CD8-positive, alpha-beta T cell (primary cell): ENCODE measurements at regions of chr7 and their contacts with region 1.

Region 1: GRCh38 chr7:2403014-2403717 is at the start of gene CHST12:
- DNase-seq: peak; percentile 87 to 99 (median 94)
- ATAC-seq: peak; percentile 78
- H3K4me3 ChIP-seq: peak within 1 kb of the TSS; percentile 84
- H3K4me3 Mint-ChIP-seq: peak within 1 kb of the TSS; percentile 84
- H3K27ac ChIP-seq: peak within 1 kb of the TSS; percentile 49 to 66
- H3K27ac Mint-ChIP-seq: peak within 1 kb of the TSS; percentile 88
- H3K4me1 ChIP-seq: peaks cover 53% of the 10 kb centered on the region
- H3K4me1 Mint-ChIP-seq: peaks cover 50% of the 10 kb centered on the region
- H3K27me3 ChIP-seq: no peaks in the 10 kb centered on the region
- H3K27me3 Mint-ChIP-seq: no peaks in the 10 kb centered on the region
- CTCF ChIP-seq: no peak
- total RNA-seq, gene CHST12: 10.3 to 11.7 TPM

Region 2: DNA sequence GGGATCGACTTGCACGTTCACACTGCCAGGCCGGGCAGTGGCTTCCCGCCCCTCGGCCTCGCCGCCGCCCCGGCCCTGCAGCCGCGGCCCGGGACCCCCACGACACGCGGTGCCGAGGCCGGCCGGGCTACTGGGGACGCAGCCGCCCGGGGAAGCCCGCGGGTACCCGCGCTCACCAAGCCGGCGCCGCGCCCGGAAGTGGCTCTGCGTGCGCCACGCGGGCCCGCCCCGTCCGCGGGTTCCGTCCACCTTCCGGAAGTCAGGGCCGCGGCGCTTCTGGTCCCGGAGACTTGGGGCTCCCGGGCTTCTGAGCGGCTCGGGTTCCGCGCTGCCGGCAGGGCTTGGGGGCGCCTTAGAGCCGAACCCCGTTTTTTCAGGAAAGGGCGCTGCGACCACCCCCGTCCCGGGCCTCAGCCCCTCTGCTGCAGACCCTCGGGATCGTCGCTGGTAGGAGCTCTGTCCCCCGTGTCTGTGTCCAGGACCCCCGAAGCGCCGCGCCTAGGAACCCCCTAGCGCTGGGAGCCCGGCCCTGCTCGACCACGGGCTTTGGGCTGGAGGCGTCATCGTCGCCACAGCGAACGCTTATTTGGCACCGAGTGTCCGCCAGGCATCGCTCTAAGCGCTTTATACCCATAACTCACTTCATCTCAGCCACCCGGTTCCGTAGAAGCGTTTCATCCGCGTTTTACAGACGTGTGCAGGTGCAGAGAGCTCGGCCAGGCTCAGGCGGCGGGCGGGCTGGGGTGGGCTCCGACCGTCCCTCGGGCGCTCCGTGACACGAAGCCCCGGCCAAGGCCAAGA is 833.1 kb before region 1 on chr7 and contains the start of gene PSMG3:
- CTCF ChIA-PET with region 1: no interaction called
- POLR2A ChIA-PET with region 1: no interaction called
- intact Hi-C with region 1: loop called in 1 of 2 experiments (anchors 1 kb)
- DNase-seq: peak; percentile 77 to 93 (median 88)
- ATAC-seq: peak; percentile 87
- H3K4me3 ChIP-seq: peak within 1 kb of the TSS; percentile 64 to 95
- H3K4me3 Mint-ChIP-seq: peak within 1 kb of the TSS; percentile 87
- H3K27ac ChIP-seq: peak within 1 kb of the TSS; percentile 69 to 90
- H3K27ac Mint-ChIP-seq: peak within 1 kb of the TSS; percentile 91
- H3K4me1 ChIP-seq: peaks cover 16% of the 10 kb centered on the region
- H3K4me1 Mint-ChIP-seq: peaks cover 29% of the 10 kb centered on the region
- H3K27me3 ChIP-seq: no peaks in the 10 kb centered on the region
- H3K27me3 Mint-ChIP-seq: no peaks in the 10 kb centered on the region
- CTCF ChIP-seq: no peak
- total RNA-seq, gene PSMG3: 20.9 to 21.0 TPM

Region 3: DNA sequence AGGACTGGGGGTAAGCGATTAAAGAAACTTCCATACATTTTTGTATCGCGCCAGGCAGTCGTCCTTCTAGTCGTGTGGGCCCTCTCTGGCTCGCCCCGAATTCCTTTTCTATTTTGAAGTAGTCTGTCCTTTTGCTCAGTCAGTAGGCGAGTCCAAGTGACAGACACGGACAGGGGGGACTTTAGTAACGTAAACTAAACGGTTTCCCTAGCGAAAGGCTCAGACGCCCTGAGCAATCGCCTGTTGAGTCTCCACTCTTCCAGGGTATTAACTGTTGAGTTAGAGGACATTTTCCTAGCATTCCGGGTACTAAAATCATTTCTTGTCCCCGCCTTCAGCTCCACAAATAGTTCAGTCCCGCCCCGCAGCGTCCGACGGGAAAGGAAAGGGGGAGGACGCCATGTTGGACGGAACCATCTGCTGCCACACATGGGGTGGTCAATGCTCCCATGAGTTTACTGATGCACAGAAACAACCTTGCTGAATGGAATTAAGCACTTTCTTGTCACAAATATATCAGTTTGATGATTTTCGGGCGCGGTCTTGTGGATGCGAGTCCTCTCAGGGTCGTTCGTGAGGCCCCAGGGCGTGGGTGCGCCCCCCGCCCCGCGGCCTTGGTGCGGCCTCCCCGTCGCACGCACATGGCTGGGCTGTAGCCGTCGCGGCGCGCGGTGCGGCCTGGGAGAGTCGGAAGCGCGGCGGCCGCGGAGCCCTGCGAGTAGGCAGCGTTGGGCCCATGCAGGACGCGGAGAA is 48.8 kb before region 1 on chr7 and contains the start of gene EIF3B:
- CTCF ChIA-PET with region 1: interaction called, 4 read pairs
- POLR2A ChIA-PET with region 1: interaction called, 10 read pairs
- intact Hi-C with region 1: loop called (anchors 1 kb)
- DNase-seq: peak; percentile 80 to 97 (median 90)
- ATAC-seq: peak; percentile 84
- H3K4me3 ChIP-seq: peak within 1 kb of the TSS; percentile 72 to 74
- H3K4me3 Mint-ChIP-seq: peak within 1 kb of the TSS; percentile 88
- H3K27ac ChIP-seq: peak within 1 kb of the TSS; percentile 99
- H3K27ac Mint-ChIP-seq: peak within 1 kb of the TSS; percentile 99
- H3K4me1 ChIP-seq: peaks cover 45% of the 10 kb centered on the region
- H3K4me1 Mint-ChIP-seq: peaks cover 40% of the 10 kb centered on the region
- H3K27me3 ChIP-seq: no peaks in the 10 kb centered on the region
- H3K27me3 Mint-ChIP-seq: no peaks in the 10 kb centered on the region
- CTCF ChIP-seq: no peak
- total RNA-seq, gene EIF3B: 234 to 239 TPM

Region 4: DNA sequence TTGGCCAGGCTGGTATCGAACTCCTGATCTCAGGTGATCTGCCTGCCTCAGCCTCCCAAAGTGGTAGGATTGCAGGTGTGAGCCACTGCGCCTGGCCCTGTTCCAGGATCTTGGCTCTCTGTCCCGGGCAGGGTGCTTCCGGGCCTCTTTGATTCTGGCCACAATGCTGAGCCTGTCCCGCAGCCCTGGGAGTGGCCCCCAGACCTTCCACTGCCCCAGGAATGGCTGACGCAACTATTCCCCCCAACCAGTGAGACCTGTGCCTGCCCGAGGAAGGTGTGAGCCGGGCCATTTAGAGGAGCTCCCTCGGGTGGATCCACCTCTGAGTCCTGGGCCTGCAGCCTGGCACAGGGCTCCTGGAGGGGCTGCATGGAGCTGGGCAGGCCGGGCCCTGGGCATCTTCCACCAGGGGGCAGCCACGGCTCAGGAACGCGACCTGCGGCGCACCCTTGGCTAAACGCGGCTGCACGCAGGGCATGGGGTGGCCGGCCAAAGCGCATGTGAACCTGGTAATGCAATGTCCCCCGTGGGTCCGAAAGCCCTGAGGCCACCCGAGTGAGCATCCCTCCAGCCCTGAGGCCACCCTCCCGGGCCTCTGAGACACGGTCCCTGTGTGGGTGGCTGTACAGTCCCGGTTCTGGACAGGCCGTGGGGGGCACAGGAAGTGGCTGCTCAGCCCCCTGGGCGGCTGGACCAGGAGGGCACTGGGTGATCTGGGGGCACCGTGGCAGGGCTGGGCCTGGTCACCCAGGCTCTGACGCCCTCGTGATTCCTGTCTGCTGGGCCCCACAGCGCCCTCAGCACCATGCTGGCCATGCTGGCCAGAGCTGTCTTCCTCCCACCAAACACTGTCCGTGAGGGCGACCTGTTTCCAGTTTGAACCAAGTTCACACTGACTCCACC is 48.3 kb after region 1 on chr7:
- CTCF ChIA-PET with region 1: interaction called, 9 read pairs
- POLR2A ChIA-PET with region 1: no interaction called
- intact Hi-C with region 1: loop called in 1 of 2 experiments (anchors 5 kb)
- DNase-seq: peak; percentile 55 to 87 (median 79)
- ATAC-seq: peak; percentile 96
- H3K4me3 ChIP-seq: peak overlapping the region; percentile 45 to 56
- H3K4me3 Mint-ChIP-seq: peak overlapping the region; percentile 67
- H3K27ac ChIP-seq: no peak overlapping the region
- H3K27ac Mint-ChIP-seq: no peak overlapping the region
- H3K4me1 ChIP-seq: peaks cover 8% of the 10 kb centered on the region
- H3K4me1 Mint-ChIP-seq: peaks cover 11% of the 10 kb centered on the region
- H3K27me3 ChIP-seq: no peaks in the 10 kb centered on the region
- H3K27me3 Mint-ChIP-seq: no peaks in the 10 kb centered on the region
- CTCF ChIP-seq: peak; percentile 70

Region 5: DNA sequence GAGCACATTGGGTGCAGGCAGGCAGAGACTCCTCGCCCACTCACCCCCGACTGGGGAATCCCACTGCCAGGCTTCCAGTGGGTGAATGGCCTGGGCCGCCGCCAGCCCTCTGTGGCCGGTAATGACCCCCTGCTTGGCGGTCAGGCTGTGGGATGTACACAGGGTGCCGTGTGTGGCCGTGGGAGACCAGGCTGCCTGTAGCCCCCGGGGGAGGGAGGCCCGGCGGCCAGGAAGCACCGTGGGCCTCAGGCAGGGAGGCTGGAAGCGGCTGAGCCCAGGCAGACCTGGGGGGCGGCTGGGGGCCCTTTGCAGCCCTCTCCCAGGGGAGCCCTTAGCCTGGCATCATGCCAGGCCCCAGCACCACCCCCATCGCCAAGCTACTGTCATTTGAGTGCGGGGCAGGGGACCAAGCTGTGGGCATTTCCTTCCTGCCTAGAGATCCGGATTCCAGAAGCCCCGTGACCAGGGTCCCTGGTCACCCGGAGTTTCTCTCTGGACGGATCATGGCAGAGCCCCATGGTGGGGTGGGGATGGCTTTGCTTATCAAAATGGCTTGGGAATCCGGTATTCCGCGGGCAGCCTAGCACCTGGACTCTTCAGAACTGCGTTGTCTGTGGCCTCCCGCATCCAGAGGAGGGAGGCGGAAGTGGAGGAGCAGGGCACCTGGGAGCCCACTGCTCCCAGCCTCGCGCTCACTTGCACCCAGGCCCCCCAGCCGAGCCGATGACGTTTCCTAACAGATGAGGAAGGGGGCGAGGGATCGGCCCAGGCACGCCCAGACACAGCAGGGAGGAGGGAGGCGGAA is 229.8 kb after region 1 on chr7:
- CTCF ChIA-PET with region 1: no interaction called
- POLR2A ChIA-PET with region 1: no interaction called
- intact Hi-C with region 1: loop called in 1 of 2 experiments (anchors 2 kb)
- DNase-seq: peak in 7 of 9 experiments; percentile 15 to 60 (median 48)
- ATAC-seq: peak; percentile 4
- H3K4me3 ChIP-seq: peak overlapping the region; percentile 69 to 79
- H3K4me3 Mint-ChIP-seq: peak overlapping the region; percentile 88
- H3K27ac ChIP-seq: peak overlapping the region; percentile 43 to 53
- H3K27ac Mint-ChIP-seq: peak overlapping the region; percentile 77
- H3K4me1 ChIP-seq: peaks cover 25% of the 10 kb centered on the region
- H3K4me1 Mint-ChIP-seq: peaks cover 14% of the 10 kb centered on the region
- H3K27me3 ChIP-seq: no peaks in the 10 kb centered on the region
- H3K27me3 Mint-ChIP-seq: no peaks in the 10 kb centered on the region
- CTCF ChIP-seq: no peak